Adrenal gland (tissue), 19 donors: ENCODE measurements at regions of chr20 and their contacts with region 1.

Region 1: GRCh38 chr20:3413393-3413889 is 6.0 kb upstream of the DNAAF9 start:
- DNase-seq: no peak
- H3K4me3 ChIP-seq: no peak overlapping the region
- H3K27ac ChIP-seq: no peak overlapping the region
- H3K4me1 ChIP-seq: peaks cover 0 to 4% of the 10 kb centered on the region in 2 donors
- H3K27me3 ChIP-seq: no peaks in the 10 kb centered on the region
- CTCF ChIP-seq: no peak
- POLR2A ChIP-seq: no peak

Region 2: DNA sequence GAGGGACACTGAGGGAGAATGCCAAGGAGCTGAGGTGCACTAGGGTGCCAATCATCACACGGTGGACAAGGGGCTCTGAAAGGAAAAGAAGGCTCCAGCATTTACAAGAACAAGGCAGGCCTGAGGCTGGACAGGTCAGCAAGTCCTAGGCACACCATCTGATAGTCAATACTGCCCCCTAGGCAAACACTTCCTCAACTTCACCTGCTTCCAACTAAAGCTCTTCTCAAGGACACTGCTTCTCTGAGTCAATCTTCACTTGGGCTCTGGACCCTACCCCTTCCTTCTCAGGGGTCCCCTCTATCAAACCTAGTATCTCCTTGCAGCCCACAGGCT is 136.8 kb before region 1 on chr20:
- intact Hi-C with region 1: no loop called
- DNase-seq: peak; percentile 32 to 58 (median 41)
- H3K4me3 ChIP-seq: no peak overlapping the region
- H3K27ac ChIP-seq: no peak overlapping the region
- H3K4me1 ChIP-seq: no peaks in the 10 kb centered on the region
- H3K27me3 ChIP-seq: no peaks in the 10 kb centered on the region
- CTCF ChIP-seq: peak in 5 of 6 experiments; percentile 30 to 52 (median 37)
- POLR2A ChIP-seq: no peak

Region 3: DNA sequence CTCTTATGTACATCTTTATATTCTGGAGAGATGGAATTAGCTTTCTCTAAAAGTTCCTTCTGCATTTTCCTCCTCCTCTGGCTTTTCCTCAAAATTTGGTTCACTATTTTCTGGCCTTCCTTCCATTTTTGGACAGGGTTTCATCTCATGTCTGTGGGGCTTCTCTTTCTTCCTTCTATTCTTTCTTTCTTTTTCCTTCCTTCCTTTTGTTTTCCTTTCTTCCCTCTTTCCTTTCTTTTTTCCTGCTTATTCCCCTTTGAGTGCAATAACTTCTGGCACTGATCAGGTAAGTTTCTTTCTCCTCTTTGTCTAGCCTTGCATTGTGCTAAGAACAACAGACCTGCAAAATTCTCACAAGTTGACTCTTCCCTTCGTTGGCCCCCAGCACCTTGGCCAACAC is 51.9 kb after region 1 on chr20:
- intact Hi-C with region 1: loop called in 1 of 2 experiments (anchors 5 kb)
- DNase-seq: no peak
- H3K4me3 ChIP-seq: no peak overlapping the region
- H3K27ac ChIP-seq: no peak overlapping the region
- H3K4me1 ChIP-seq: no peaks in the 10 kb centered on the region
- H3K27me3 ChIP-seq: no peaks in the 10 kb centered on the region
- CTCF ChIP-seq: no peak
- POLR2A ChIP-seq: no peak

Region 4: DNA sequence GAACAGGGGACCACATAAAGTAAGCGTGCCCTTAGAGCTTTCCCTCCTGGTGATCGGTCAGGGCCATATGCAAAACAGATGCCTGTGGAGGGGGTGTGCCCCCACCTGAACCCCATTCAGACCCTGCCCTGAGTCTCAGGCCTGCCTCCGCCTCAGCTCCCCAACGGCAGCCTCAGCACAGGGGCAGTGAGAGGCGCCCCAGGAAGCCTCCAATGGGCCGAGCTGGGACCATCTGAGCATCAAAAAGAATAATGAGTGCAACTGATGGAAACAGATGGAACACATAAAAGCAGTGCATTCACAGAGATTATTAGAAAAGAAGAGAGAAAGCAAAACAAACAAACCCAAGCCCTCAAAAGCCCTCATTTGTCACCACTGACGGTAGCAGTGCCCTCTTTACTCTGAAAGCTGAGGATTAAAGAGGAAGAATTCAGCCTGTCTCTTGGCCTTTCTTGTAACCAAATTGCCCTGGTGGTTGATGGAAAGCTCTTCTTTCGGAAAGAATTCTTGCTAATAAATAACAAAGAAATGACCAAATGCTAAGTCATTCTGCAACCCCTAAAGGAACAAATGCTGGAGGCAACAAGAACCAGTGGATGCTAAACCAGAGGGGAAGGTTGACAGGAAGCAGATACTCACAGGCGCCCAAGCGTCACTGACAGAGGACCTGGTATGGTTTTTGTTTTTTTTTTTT is 347.4 kb after region 1 on chr20:
- intact Hi-C with region 1: no loop called
- DNase-seq: no peak
- H3K4me3 ChIP-seq: no peak overlapping the region
- H3K27ac ChIP-seq: no peak overlapping the region
- H3K4me1 ChIP-seq: peaks cover 0 to 6% of the 10 kb centered on the region in 2 donors
- H3K27me3 ChIP-seq: no peaks in the 10 kb centered on the region
- CTCF ChIP-seq: no peak
- POLR2A ChIP-seq: no peak